ENCODE measurements at regions of chr5 and their contacts with region 1.

Region 1: DNA sequence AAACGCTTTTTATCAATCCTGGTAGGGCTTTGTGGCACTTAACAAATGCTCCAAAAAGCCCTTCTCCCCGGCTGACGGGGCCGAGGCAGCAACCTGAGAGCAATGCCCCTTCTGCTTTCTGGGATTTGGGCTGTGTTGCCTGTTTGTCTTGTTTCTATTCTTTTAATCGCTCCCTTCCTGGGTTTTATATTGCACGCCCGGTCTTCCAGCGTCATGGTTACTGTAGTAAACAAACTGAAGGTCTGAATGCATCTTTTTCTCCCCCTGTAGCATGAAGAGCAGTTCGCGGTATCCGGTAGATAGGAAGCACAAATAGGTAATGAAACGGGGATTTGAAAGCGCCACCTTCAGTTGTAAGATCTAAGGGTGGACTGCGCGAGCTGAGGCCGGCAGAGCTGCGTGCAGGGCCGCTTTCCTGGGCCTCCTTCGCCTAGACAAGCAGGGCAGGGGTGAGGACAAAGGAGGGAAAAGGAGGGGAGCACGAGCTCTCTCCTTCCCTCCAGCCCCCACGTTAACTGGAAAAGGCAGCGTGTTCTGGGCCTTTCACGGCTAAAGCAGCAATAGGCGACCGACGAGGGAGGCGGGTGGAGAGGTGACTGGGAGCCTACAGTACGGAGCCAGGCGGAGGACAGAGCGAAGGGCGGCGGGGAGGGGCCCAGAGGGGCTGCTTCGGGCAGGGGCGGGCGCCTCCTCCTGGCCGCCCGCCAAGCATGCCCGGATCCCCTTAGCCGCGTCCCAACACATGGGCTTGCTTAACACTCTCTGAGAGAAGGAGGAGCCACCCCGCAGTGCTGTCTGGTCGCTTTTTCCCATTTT is 49.3 kb upstream of the ZNF366 start:
- DNase-seq: peak; percentile 76
- CTCF ChIP-seq: peak; percentile 33

Region 2: DNA sequence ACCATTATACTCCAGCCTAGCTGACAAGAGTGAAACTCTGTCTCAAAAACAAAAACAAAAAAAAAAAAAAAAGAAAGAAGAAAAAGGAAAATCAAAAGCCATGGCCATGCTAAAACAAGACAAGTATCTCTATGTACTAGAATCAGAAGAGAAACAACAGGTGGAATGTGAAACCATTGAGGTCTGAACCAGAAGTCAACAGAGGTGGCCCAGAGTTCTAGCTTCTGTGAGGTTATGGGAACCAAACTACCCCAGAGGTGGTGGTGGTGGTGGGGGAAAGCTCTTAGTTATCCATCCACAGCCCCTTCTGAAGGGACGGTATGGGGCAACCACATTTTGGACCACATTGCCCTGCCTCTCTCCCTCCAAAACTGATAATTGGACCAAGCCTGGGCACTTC is 10.2 kb after region 1 on chr5:
- CTCF ChIA-PET with region 1: interaction called, 16 read pairs
- POLR2A ChIA-PET with region 1: no interaction called
- DNase-seq: no peak
- CTCF ChIP-seq: no peak

Region 3: DNA sequence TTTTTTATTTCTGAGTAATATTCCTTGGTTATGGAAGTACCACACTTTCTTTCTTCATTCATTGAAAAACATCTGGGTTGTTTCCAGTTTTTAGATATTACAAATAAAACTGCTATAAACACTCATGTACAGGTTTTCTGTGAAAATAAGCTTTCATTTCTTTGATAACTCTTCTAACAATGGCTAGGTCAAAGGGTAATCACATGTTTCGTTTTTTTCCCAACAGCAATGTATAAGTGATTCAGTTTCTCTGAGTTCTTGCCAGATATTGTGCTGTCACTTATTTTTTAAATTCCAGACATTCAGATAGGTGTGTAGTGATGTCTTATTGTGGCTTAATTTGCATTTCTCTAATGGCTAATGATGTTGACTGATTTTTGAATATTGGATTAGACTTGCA is 243.2 kb after region 1 on chr5:
- CTCF ChIA-PET with region 1: no interaction called
- POLR2A ChIA-PET with region 1: no interaction called
- DNase-seq: no peak
- CTCF ChIP-seq: no peak